CD8-positive, alpha-beta T cell (primary cell): ENCODE measurements at regions of chrX and their contacts with region 1.

Region 1: GRCh38 chrX:149512225-149512885 is 7.2 kb upstream of the IDS start:
- DNase-seq: peak in 7 of 9 experiments; percentile 34 to 79 (median 60)
- ATAC-seq: peak; percentile 80
- H3K4me3 ChIP-seq: no peak overlapping the region
- H3K4me3 Mint-ChIP-seq: no peak overlapping the region
- H3K27ac ChIP-seq: peak overlapping the region in 1 of 2 experiments; percentile 50
- H3K27ac Mint-ChIP-seq: peak overlapping the region; percentile 49
- H3K4me1 ChIP-seq: peaks cover 28% of the 10 kb centered on the region
- H3K4me1 Mint-ChIP-seq: peaks cover 27% of the 10 kb centered on the region
- H3K27me3 ChIP-seq: no peaks in the 10 kb centered on the region
- H3K27me3 Mint-ChIP-seq: no peaks in the 10 kb centered on the region
- CTCF ChIP-seq: peak; percentile 43

Region 2: DNA sequence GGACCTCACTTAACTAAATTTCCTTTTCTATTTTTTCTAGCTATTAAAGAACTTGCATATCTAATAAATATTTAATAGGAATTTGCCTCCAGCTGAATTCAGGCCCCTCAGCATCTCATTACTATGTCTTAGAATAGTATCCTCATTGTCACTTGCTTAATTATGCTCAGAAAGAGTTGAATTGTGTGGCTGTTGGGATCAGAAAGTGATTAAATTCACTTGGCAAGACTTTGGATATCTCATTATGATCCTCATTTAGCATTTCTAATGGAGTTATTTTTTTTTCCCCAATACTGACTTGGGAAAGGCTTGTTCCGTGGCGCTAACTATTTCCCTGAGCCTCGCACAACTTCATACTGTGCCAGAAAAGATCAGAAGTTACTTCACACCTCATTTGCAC is 166.0 kb before region 1 on chrX:
- CTCF ChIA-PET with region 1: no interaction called
- POLR2A ChIA-PET with region 1: no interaction called
- intact Hi-C with region 1: no loop called
- DNase-seq: no peak
- ATAC-seq: no peak
- H3K4me3 ChIP-seq: no peak overlapping the region
- H3K4me3 Mint-ChIP-seq: no peak overlapping the region
- H3K27ac ChIP-seq: no peak overlapping the region
- H3K27ac Mint-ChIP-seq: no peak overlapping the region
- H3K4me1 ChIP-seq: no peaks in the 10 kb centered on the region
- H3K4me1 Mint-ChIP-seq: no peaks in the 10 kb centered on the region
- H3K27me3 ChIP-seq: no peaks in the 10 kb centered on the region
- H3K27me3 Mint-ChIP-seq: no peaks in the 10 kb centered on the region
- CTCF ChIP-seq: no peak

Region 3: GRCh38 chrX:149527705-149528104 is 15.3 kb after region 1 on chrX:
- CTCF ChIA-PET with region 1: interaction called, 19 read pairs
- POLR2A ChIA-PET with region 1: no interaction called
- intact Hi-C with region 1: loop called in 1 of 2 experiments (anchors 2 kb)
- DNase-seq: peak in 4 of 9 experiments; percentile 34 to 74 (median 51)
- ATAC-seq: peak; percentile 41
- H3K4me3 ChIP-seq: no peak overlapping the region
- H3K4me3 Mint-ChIP-seq: no peak overlapping the region
- H3K27ac ChIP-seq: peak overlapping the region in 1 of 2 experiments; percentile 37
- H3K27ac Mint-ChIP-seq: peak overlapping the region; percentile 74
- H3K4me1 ChIP-seq: peaks cover 22% of the 10 kb centered on the region
- H3K4me1 Mint-ChIP-seq: peaks cover 30% of the 10 kb centered on the region
- H3K27me3 ChIP-seq: no peaks in the 10 kb centered on the region
- H3K27me3 Mint-ChIP-seq: no peaks in the 10 kb centered on the region
- CTCF ChIP-seq: no peak

Region 4: DNA sequence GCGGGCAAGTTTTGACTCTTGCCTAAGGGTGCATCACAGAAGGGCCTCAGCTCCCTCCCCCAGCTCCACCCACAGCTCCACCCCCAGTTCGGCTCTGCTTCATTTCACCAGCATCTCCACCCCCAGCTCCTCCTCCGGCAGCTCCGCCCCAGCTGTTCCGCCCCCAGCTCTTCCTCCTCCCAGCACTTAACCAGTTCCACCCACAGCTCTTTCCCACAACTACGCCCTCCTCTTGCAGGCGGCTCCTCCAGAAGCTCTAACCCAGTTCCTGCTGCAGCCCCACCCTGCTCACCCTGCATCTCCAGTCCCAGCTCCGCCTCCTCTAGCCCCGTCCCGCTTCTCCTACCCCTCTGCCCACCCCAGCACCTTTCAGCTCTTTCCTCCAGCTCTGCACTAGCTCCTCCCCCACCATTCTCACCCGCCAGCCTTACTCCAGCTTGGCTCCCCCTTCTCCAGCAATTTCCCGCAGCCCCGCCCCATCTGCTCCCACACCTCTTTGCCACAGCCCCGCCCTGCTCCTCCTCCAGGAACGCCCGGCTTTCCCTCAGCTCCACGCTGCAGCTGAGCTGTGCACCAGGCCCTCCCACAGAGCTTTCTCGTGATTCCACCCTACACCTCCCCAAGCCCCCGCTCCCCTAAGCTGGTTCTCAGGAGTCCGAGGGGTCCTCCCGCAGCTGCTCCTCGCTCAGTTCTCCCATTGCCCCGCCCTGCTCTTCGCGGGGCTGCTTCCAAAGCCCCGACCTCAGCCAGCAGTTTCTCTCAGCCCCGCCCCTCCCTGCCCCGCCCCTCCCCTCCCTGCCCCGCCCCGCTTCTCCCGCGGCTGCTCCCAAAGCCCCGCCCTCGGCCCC is 27.2 kb after region 1 on chrX:
- CTCF ChIA-PET with region 1: interaction called, 23 read pairs
- POLR2A ChIA-PET with region 1: interaction called, 5 read pairs
- intact Hi-C with region 1: loop called in 1 of 2 experiments (anchors 2 kb)
- DNase-seq: peak; percentile 74 to 96 (median 85)
- ATAC-seq: peak; percentile 54
- H3K4me3 ChIP-seq: peak overlapping the region; percentile 58 to 76
- H3K4me3 Mint-ChIP-seq: peak overlapping the region; percentile 85
- H3K27ac ChIP-seq: peak overlapping the region; percentile 61 to 71
- H3K27ac Mint-ChIP-seq: peak overlapping the region; percentile 81
- H3K4me1 ChIP-seq: peaks cover 7% of the 10 kb centered on the region
- H3K4me1 Mint-ChIP-seq: peaks cover 6% of the 10 kb centered on the region
- H3K27me3 ChIP-seq: no peaks in the 10 kb centered on the region
- H3K27me3 Mint-ChIP-seq: no peaks in the 10 kb centered on the region
- CTCF ChIP-seq: no peak

Region 5: DNA sequence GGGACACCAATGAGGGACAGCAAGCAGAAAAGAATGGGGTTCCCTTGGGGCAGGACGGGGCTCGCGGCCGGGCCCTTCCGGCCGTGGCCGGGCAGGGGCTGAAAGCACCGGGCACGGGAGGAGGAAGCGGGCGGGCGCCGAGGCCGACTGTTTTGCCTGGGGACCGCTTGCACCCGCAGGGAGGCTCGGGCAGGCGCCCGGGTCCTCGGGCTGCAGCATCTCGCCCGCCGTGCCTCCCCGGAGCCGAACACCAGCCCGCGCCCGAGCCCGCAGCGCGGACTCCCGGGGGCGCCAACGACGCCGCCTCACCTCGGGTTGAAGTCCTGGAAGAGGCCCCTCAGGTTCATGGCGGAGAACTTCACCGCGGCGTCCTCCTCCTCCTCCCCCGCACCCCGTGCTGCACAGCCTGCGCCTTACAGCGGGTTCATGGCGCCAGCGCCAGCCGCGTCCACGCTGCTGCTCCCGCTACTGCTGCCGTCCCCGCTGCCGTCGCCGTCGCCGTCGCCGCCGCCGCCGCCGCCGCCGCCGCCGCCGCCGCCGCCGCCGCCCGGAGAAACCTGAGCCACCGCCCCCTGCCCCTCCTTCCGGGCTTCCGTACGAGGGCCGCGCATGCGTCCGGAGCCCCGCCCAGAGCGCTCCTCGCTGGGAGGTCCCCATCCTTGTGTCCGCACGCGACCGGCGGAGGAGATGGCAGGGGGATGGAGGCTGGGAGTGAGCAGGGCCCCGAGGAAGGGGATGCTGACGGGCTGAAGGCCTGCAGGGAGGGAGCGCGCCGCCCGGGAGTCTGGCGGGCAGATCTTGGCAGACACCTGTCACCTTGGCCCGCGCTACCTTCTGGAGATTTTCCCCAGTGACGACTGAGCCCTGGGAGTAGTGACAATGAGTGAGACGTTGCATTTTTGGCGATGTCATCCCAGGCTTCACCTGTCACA is 119.1 kb after region 1 on chrX and contains the start of gene TMEM185A:
- CTCF ChIA-PET with region 1: no interaction called
- POLR2A ChIA-PET with region 1: no interaction called
- intact Hi-C with region 1: loop called (anchors 5 kb)
- DNase-seq: peak; percentile 45 to 86 (median 72)
- ATAC-seq: peak; percentile 89
- H3K4me3 ChIP-seq: peak within 1 kb of the TSS; percentile 55 to 67
- H3K4me3 Mint-ChIP-seq: peak within 1 kb of the TSS; percentile 91
- H3K27ac ChIP-seq: peak within 1 kb of the TSS in 1 of 2 experiments; percentile 53
- H3K27ac Mint-ChIP-seq: peak within 1 kb of the TSS; percentile 79
- H3K4me1 ChIP-seq: peaks cover 22% of the 10 kb centered on the region
- H3K4me1 Mint-ChIP-seq: peaks cover 41% of the 10 kb centered on the region
- H3K27me3 ChIP-seq: no peaks in the 10 kb centered on the region
- H3K27me3 Mint-ChIP-seq: peaks cover 4% of the 10 kb centered on the region
- CTCF ChIP-seq: no peak
- total RNA-seq, gene TMEM185A: 6.9 to 11.3 TPM

Region 6: GRCh38 chrX:150291014-150291413 is 778.7 kb after region 1 on chrX:
- CTCF ChIA-PET with region 1: no interaction called
- POLR2A ChIA-PET with region 1: no interaction called
- intact Hi-C with region 1: no loop called
- DNase-seq: peak in 1 of 9 experiments; percentile 29
- ATAC-seq: no peak
- H3K4me3 ChIP-seq: no peak overlapping the region
- H3K4me3 Mint-ChIP-seq: no peak overlapping the region
- H3K27ac ChIP-seq: no peak overlapping the region
- H3K27ac Mint-ChIP-seq: no peak overlapping the region
- H3K4me1 ChIP-seq: no peaks in the 10 kb centered on the region
- H3K4me1 Mint-ChIP-seq: no peaks in the 10 kb centered on the region
- H3K27me3 ChIP-seq: no peaks in the 10 kb centered on the region
- H3K27me3 Mint-ChIP-seq: no peaks in the 10 kb centered on the region
- CTCF ChIP-seq: no peak

Region 7: DNA sequence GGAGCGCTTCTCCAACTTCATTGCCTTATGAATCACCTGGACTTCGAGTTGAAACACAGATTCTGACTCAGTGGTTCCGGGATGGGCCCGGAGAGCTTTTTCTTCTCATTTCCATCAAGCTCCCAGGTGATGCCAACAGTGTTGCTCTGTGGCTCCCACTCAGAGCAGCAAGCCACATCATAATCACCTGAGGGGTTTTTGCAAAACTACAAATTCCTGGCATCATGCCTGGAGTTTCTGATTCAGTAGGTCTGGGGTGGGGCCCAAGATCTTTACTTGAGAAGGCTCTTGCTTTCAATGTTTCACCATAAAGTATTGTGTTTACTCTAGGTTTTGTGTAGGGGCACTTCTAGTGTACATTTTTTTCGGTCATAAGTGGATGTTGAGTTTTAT is 1063.1 kb after region 1 on chrX:
- CTCF ChIA-PET with region 1: no interaction called
- POLR2A ChIA-PET with region 1: no interaction called
- intact Hi-C with region 1: loop called in 1 of 2 experiments (anchors 10 kb)
- DNase-seq: peak in 7 of 9 experiments; percentile 15 to 78 (median 56)
- ATAC-seq: peak; percentile 81
- H3K4me3 ChIP-seq: peak overlapping the region in 1 of 2 experiments; percentile 33
- H3K4me3 Mint-ChIP-seq: peak overlapping the region; percentile 74
- H3K27ac ChIP-seq: peak overlapping the region in 1 of 2 experiments; percentile 31
- H3K27ac Mint-ChIP-seq: peak overlapping the region; percentile 88
- H3K4me1 ChIP-seq: peaks cover 71% of the 10 kb centered on the region
- H3K4me1 Mint-ChIP-seq: peaks cover 81% of the 10 kb centered on the region
- H3K27me3 ChIP-seq: no peaks in the 10 kb centered on the region
- H3K27me3 Mint-ChIP-seq: no peaks in the 10 kb centered on the region
- CTCF ChIP-seq: no peak